ENCODE measurements at regions of chr11 and their contacts with region 1.

Region 1: GRCh38 chr11:119356349-119357031 is 10.0 kb upstream of the MFRP start:
- DNase-seq: peak in 1 of 2 donors; percentile 89
- H3K4me3 ChIP-seq: peak overlapping the region; percentile 42 to 71
- H3K27ac ChIP-seq: no peak overlapping the region
- H3K4me1 ChIP-seq: peaks cover 0 to 6% of the 10 kb centered on the region in 2 donors
- H3K27me3 ChIP-seq: no peaks in the 10 kb centered on the region
- CTCF ChIP-seq: peak; percentile 85 to 87 (median 85)

Region 2: GRCh38 chr11:119298726-119299125 is 57.8 kb before region 1 on chr11:
- intact Hi-C with region 1: no loop called
- DNase-seq: no peak
- H3K4me3 ChIP-seq: no peak overlapping the region
- H3K27ac ChIP-seq: peak overlapping the region in 1 of 2 donors; percentile 38
- H3K4me1 ChIP-seq: no peaks in the 10 kb centered on the region
- H3K27me3 ChIP-seq: no peaks in the 10 kb centered on the region
- CTCF ChIP-seq: no peak

Region 3: GRCh38 chr11:119373921-119374631 is 17.6 kb after region 1 on chr11:
- intact Hi-C with region 1: loop called (anchors 1 kb)
- DNase-seq: peak in 1 of 2 donors; percentile 89
- H3K4me3 ChIP-seq: no peak overlapping the region
- H3K27ac ChIP-seq: no peak overlapping the region
- H3K4me1 ChIP-seq: peaks cover 5 to 15% of the 10 kb centered on the region in 2 donors
- H3K27me3 ChIP-seq: no peaks in the 10 kb centered on the region
- CTCF ChIP-seq: peak; percentile 82 to 85 (median 84)

Region 4: DNA sequence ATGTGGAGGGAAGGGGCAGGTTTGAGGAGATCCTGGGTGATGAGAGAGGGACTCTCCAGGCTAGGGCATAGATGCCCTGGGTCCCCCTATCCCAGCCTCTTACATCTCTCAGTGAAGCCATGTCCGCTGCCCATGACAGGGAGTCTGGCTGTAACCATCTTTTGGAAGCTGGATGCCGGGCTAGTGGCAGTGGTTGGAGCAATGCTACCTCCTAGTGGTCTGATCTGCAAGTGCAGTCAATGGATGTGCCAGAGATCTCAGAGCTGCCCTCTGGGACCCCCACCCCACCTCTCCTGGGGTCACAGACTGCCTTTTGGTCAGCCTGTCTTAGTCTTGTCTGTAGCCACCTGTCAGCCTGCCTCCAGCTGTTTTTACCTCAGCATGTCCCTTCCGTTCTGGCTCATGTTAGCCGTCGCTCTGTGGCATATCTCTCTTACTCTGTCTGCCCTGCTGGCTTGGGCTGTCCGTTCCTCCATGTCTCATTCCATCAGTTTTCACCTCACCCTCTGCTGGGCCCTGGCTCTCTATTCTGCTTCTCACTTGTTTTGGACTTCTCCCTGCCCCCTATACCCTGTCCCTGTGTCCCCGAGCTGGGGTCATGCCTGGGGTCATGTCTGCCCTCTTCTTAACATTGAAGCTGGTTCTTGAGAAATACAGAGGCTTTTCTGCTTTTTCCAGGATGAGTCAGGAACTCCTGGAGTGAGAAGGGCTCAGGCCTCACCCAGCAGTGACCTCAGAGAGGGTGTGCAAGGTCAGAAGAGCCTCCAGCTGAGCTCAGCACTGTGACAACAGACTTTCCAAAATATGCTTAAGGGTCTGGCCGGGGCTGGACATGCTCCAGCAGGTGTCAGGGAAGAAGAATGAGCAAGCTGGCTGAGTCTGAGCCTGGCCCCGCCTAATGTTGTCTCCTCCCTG is 118.4 kb after region 1 on chr11:
- intact Hi-C with region 1: loop called (anchors 1 kb)
- DNase-seq: peak in 1 of 2 donors; percentile 63
- H3K4me3 ChIP-seq: no peak overlapping the region
- H3K27ac ChIP-seq: no peak overlapping the region
- H3K4me1 ChIP-seq: no peaks in the 10 kb centered on the region
- H3K27me3 ChIP-seq: no peaks in the 10 kb centered on the region
- CTCF ChIP-seq: peak; percentile 77 to 79 (median 79)

Region 5: DNA sequence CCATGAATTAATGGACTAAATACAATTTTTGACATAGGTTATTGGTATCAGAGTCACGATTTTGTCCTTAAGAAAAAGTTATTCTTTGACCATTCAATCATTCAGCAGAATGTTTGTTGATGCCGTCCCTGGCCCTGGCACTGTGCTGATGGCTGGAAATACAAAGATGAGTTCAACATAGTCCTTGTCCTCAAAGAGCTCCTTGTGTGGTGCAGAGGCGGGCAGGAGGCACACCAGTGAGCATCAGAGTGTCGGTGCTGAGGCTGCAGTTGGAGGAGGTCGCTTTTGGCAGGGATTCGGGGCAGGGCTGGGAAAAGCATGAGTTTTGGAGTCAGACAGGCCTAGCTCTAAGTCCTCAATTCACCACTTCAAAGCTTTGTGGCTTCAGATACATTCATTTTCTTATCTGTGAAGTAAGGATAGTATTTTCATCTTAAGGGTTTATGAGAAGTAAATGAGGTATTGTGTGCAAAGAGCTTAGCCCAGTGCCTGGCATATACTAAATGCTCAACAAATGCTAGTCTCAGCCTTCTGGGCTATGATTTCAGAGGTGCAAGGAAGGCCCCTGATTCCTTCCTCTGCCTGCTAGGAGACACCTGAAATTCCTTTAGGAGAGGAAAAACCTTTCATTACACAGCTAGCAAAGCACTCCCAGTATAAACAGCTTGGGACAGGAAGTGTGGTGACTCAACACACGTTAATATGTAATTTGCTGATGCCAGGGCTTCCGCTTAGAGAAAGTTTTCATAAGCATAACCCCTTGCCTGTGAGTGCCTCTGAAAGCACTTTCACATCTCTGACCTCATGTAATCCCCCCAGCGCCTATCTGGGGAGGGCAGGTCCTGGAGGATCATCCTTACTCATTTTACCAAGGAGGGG is 258.8 kb after region 1 on chr11:
- intact Hi-C with region 1: no loop called
- DNase-seq: no peak
- H3K4me3 ChIP-seq: no peak overlapping the region
- H3K27ac ChIP-seq: no peak overlapping the region
- H3K4me1 ChIP-seq: no peaks in the 10 kb centered on the region
- H3K27me3 ChIP-seq: no peaks in the 10 kb centered on the region
- CTCF ChIP-seq: no peak